GM12878 (cell line): ENCODE measurements at regions of chr4 and their contacts with region 1.

Region 1: DNA sequence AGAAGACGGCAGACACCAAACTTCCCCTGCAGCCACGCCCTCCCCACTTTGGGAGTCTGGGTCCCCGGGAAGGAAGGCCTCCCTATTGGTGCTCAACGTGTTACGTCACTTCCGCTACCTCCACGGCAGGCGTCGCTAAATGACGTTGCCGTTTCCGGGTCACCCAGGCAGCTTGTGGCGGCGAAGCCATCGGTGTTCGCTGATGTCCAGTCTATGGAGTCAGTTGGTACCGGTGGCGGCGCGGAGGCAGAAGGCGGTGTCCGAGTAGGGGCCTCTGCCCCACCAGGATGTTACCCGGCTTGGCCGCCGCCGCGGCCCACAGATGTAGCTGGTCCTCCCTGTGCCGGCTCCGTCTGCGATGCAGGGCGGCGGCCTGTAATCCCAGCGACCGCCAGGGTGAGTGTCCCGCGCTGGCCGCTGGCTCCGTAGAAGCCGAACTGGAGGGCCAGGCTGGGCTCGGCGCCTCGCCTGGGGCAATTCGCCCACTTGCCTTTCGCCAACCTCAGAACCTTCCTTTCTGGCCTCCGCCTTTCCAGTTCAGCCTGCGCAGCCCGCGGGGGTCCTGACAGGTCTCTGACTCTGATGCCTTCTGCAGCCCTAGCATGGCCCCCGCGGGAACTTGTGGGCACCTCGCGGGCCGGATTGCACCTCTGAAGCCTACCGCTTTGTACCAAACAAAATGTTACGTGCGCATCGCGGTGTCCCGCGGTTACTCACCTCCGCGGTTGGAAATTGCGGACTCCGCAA is at the start of gene SLC30A9:
- DNase-seq: peak; percentile 82
- ATAC-seq: peak; percentile 95
- H3K4me3 ChIP-seq: peak within 1 kb of the TSS; percentile 82
- H3K27ac ChIP-seq: peak within 1 kb of the TSS; percentile 74
- H3K4me1 ChIP-seq: no peaks in the 10 kb centered on the region; the same call in 1 of the 2 replicates
- H3K27me3 ChIP-seq: no peaks in the 10 kb centered on the region
- CTCF ChIP-seq: peak in 2 of 3 experiments; percentile 19 to 36; a peak in 2 of 6 replicates
- EP300 ChIP-seq: 0 out of 4 replicates have a peak, but pooled peaks of 1 of the 2 experiments have one; percentile 45
- POLR2A ChIP-seq: peak; percentile 96
- RAD21 ChIP-seq: no peak
- polyA plus RNA-seq, gene SLC30A9: 12.1 to 15.4 TPM

Region 2: DNA sequence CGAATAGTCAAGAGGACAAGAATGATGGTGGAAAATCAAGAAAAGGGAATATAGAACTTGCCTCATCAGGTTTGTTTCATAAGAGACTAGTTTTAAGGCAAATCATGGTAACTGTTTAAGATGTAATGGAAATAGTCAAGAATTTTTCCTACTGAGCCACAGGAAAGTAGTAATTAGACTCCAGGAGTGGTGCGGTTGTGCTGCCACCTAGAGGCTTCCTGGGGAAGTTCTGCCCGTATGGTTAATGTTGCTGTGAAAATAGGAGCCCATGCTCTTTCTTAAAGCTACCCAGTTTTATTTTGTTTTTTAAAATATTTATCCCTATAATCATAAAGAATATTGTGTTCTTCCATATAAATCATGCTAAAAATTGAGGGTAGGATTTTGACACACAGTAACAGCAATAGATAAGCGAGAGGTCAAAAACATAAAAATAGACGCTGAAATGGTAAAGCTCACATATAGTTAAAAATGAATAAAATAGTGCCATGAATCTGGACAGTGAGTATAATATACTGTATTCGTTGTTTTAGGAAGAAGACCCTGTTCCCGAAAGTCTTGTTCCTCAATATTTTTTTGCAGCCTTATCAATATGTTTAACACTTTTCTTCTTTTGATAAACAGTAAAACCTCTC is 329.0 kb before region 1 on chr4:
- CTCF ChIA-PET with region 1: no interaction called
- POLR2A ChIA-PET with region 1: no interaction called
- RAD21 ChIA-PET with region 1: no interaction called
- SMC1A ChIA-PET with region 1: no interaction called
- in situ Hi-C with region 1: no loop called
- intact Hi-C with region 1: no loop called
- DNase-seq: no peak
- ATAC-seq: peak; percentile 84
- H3K4me3 ChIP-seq: no peak overlapping the region
- H3K27ac ChIP-seq: no peak overlapping the region
- H3K4me1 ChIP-seq: no peaks in the 10 kb centered on the region
- H3K27me3 ChIP-seq: peaks cover 0 to 2% of the 10 kb centered on the region in 2 experiments; a peak in 1 of 4 replicates
- CTCF ChIP-seq: peak; percentile 83 to 92 (median 89)
- EP300 ChIP-seq: no peak
- POLR2A ChIP-seq: no peak
- RAD21 ChIP-seq: peak; percentile 79

Region 3: GRCh38 chr4:41934815-41935651 is 55.5 kb before region 1 on chr4 and contains the start of gene TMEM33:
- CTCF ChIA-PET with region 1: no interaction called
- POLR2A ChIA-PET with region 1: interaction called, 4 read pairs
- RAD21 ChIA-PET with region 1: interaction called, 3 read pairs
- SMC1A ChIA-PET with region 1: interaction called, 3 read pairs
- in situ Hi-C with region 1: no loop called
- intact Hi-C with region 1: loop called (anchors 5 kb)
- DNase-seq: peak; percentile 71
- ATAC-seq: peak; percentile 88
- H3K4me3 ChIP-seq: peak within 1 kb of the TSS; percentile 97
- H3K27ac ChIP-seq: peak within 1 kb of the TSS; percentile 63
- H3K4me1 ChIP-seq: peaks cover 3% of the 10 kb centered on the region; the same call in 1 of the 2 replicates
- H3K27me3 ChIP-seq: no peaks in the 10 kb centered on the region
- CTCF ChIP-seq: no peak
- EP300 ChIP-seq: no peak
- POLR2A ChIP-seq: peak; percentile 85
- RAD21 ChIP-seq: no peak
- polyA plus RNA-seq, gene TMEM33: 7.9 to 16.0 TPM

Region 4: DNA sequence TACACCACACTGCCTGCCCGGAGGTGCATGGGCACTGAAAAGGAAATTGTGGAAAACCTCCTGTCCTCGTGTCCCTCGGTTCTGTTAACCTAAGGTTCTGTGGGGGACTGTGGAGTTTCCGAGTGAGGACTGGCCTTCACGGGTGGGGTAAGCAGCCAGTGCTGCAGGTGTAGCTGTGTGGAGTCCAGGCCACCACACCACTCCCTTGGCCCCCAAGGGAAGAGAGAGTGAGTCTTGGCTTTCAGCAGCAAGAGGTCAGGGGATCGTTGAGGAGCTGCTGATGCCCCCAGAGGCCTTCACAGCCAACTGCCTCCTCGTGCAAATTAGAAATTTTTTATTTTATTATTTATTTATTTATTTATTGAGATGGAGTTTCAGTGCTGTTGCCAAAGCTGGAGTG is 141.6 kb after region 1 on chr4:
- CTCF ChIA-PET with region 1: no interaction called
- POLR2A ChIA-PET with region 1: no interaction called
- RAD21 ChIA-PET with region 1: no interaction called
- SMC1A ChIA-PET with region 1: no interaction called
- in situ Hi-C with region 1: no loop called
- intact Hi-C with region 1: no loop called
- DNase-seq: no peak
- ATAC-seq: no peak
- H3K4me3 ChIP-seq: no peak overlapping the region
- H3K27ac ChIP-seq: no peak overlapping the region
- H3K4me1 ChIP-seq: no peaks in the 10 kb centered on the region
- H3K27me3 ChIP-seq: no peaks in the 10 kb centered on the region
- CTCF ChIP-seq: no peak
- EP300 ChIP-seq: no peak
- POLR2A ChIP-seq: no peak
- RAD21 ChIP-seq: no peak